Activated CD8-positive, alpha-beta T cell treated with anti-CD3 and anti-CD28 coated beads, Interleukin-2, amount 10 ng/mL, durations not matched to agents 7 days and 5 days (primary cell): ENCODE measurements at regions of chr5 and their contacts with region 1.

Region 1: GRCh38 chr5:180831139-180832048 is 28.8 kb upstream of the MGAT1 start:
- DNase-seq: peak; percentile 81
- ATAC-seq: peak; percentile 79
- H3K4me3 Mint-ChIP-seq: peak overlapping the region; percentile 96
- H3K27ac Mint-ChIP-seq: peak overlapping the region; percentile 99
- H3K4me1 Mint-ChIP-seq: peaks cover 34% of the 10 kb centered on the region
- H3K27me3 Mint-ChIP-seq: no peaks in the 10 kb centered on the region

Region 2: DNA sequence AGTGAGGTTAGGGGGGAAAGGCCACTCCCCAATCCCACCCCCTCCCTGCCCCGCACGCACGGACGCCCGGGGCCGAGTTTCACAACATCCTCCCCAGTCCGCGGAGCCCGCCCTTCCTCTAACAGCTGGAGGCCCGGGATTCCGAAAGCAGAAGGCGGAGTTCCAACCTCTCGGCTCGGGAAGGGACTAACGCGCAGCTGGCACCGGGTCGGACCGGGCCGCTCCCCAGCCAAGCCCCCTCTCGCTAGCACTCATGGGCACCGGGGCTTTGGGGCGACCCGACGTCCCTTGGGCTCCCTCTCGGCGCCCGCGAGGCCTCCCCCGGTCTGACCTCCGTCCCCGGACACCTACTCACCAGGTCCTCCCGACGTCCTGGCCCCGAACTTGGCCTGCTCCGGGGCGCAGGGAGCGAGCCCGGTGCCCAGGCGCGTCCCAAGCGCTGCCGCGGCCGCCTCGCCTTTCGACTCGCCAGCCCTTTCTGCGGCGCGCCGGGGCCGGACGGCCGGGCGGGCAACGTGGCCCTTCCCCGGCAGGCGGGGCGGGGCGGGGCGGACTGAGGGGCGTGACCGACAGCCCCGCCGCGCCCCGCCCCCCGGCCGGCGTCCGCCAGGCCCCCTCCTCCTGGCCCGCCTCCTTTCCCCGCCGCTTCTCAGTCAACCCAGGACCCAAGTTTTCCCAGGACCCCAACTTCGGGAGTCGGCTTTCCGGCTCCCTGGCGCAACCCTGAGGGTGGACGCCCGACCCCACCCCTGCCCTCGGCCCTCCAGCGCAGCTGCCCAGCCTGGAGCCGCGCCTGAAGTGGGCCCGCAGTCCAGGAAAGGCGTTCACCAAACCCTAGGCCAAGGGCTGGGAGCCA is 28.8 kb before region 1 on chr5 and contains the start of gene MGAT1:
- CTCF ChIA-PET with region 1: interaction called, 42 read pairs
- POLR2A ChIA-PET with region 1: interaction called, 244 read pairs
- DNase-seq: peak; percentile 82
- ATAC-seq: peak; percentile 53
- H3K4me3 Mint-ChIP-seq: peak within 1 kb of the TSS; percentile 87
- H3K27ac Mint-ChIP-seq: peak within 1 kb of the TSS; percentile 100
- H3K4me1 Mint-ChIP-seq: peaks cover 81% of the 10 kb centered on the region
- H3K27me3 Mint-ChIP-seq: no peaks in the 10 kb centered on the region
- total RNA-seq, gene MGAT1: 154 to 161 TPM

Region 3: GRCh38 chr5:180810210-180810958 is 21.0 kb before region 1 on chr5:
- CTCF ChIA-PET with region 1: interaction called, 42 read pairs
- POLR2A ChIA-PET with region 1: interaction called, 244 read pairs
- DNase-seq: peak; percentile 96
- ATAC-seq: peak; percentile 79
- H3K4me3 Mint-ChIP-seq: peak overlapping the region; percentile 73
- H3K27ac Mint-ChIP-seq: peak overlapping the region; percentile 100
- H3K4me1 Mint-ChIP-seq: peaks cover 68% of the 10 kb centered on the region
- H3K27me3 Mint-ChIP-seq: no peaks in the 10 kb centered on the region

Region 4: GRCh38 chr5:180816608-180817534 is 14.5 kb before region 1 on chr5:
- CTCF ChIA-PET with region 1: interaction called, 32 read pairs
- POLR2A ChIA-PET with region 1: interaction called, 244 read pairs
- DNase-seq: no peak
- ATAC-seq: peak; percentile 77
- H3K4me3 Mint-ChIP-seq: no peak overlapping the region
- H3K27ac Mint-ChIP-seq: no peak overlapping the region
- H3K4me1 Mint-ChIP-seq: peaks cover 40% of the 10 kb centered on the region
- H3K27me3 Mint-ChIP-seq: no peaks in the 10 kb centered on the region

Region 5: DNA sequence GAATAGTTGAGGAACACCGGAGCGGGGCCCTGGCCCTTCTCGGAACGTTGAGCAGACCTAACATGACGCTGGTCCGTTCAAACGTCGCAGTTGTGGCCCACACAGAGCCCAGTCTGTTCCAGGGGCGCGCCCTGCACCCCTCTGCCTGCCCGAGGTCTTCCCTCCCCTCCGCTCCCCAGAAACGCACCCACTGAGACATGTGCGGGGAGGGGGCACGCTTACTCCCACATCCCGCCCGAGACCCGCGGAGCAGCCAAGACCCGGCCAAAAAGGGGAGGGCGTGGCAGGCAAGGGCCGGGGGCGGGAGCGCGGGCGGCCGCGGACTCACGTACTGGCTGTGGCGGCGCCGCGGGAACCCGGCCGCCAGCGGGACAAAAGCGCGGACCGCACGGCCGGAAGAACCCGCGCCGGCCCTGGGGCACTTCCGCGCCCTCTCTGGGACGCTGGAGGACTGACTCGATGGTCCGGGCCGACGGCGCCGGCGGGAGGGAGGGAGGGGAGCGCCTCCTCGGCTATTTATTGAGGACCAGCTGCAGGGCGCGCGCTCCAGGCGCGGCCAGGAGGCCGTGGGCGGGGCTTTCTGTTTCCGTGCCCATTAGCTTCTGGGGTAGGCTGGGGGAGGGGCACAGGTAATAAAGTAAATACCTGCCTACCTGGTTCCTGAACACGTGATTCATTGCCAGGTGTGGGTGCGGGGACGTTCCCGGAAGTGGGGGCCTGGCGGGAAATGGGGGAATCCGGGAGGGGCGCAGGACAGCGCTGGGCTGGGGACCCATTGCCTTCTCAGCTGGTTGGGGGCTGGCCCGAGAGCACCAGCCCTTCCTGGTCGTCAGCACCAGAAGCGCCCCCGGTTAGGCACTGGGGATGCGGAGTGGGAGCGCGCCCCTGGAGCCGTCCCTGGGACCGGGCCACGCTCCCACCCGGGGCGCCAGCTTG is 29.8 kb after region 1 on chr5 and contains the start of gene ZFP62:
- CTCF ChIA-PET with region 1: interaction called, 8 read pairs
- POLR2A ChIA-PET with region 1: interaction called, 38 read pairs
- DNase-seq: peak; percentile 90
- ATAC-seq: peak; percentile 85
- H3K4me3 Mint-ChIP-seq: peak within 1 kb of the TSS; percentile 87
- H3K27ac Mint-ChIP-seq: peak within 1 kb of the TSS; percentile 86
- H3K4me1 Mint-ChIP-seq: peaks cover 17% of the 10 kb centered on the region
- H3K27me3 Mint-ChIP-seq: peaks cover 2% of the 10 kb centered on the region
- total RNA-seq, gene ZFP62: 22.8 to 25.3 TPM